T-cell (primary cell): ENCODE measurements at regions of chr22 and their contacts with region 1.

Region 1: DNA sequence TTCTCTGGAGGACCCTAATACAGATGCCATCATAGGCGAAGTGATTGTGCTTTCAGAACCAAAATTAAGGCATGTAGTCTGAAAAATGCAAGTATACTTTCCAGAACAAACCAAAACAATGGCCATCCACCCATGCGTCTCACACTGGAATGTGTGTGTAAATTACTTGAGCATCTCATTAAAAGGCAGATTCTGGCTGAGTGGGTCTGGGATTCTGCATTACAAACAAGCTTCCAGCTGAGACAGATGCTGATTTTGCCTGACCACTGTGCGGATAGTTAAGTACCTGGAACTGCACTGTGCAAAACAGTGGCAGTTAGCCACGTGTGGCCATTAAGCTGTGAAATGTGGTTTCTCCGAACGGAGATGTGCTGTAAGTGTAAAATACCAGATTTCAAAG is 26.2 kb downstream of the RRP7A start:
- DNase-seq: no peak
- ATAC-seq: no peak
- H3K4me3 ChIP-seq: no peak overlapping the region
- H3K4me3 Mint-ChIP-seq: no peak overlapping the region
- H3K27ac ChIP-seq: no peak overlapping the region
- H3K27ac Mint-ChIP-seq: no peak overlapping the region
- H3K4me1 ChIP-seq: no peaks in the 10 kb centered on the region
- H3K4me1 Mint-ChIP-seq: peaks cover 0 to 3% (median 3%) of the 10 kb centered on the region in 3 donors
- H3K27me3 ChIP-seq: peaks cover 0 to 5% of the 10 kb centered on the region in 2 experiments
- H3K27me3 Mint-ChIP-seq: no peaks in the 10 kb centered on the region

Region 2: DNA sequence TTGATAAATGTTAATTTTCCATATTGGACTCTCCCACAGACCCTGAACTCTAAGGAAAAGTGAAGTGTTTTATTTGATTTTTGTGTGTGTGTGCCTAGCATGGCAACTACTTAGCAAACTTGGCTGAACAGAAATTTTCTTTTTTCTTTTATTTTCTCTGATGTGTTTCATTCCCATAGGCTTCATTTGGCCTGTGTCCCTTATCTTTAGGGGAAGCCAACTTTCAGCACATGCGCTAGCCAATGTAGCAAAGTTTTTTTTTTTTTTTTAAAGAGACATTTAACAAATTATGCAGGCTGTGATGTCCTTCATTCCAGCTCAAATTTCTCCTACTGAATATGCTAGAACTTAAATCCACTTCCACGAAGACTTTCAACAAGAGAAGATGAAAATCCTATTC is 237.2 kb before region 1 on chr22:
- CTCF ChIA-PET with region 1: no interaction called
- POLR2A ChIA-PET with region 1: interaction called in 1 of 2 experiments, 11 read pairs
- DNase-seq: no peak
- ATAC-seq: no peak
- H3K4me3 ChIP-seq: no peak overlapping the region
- H3K4me3 Mint-ChIP-seq: no peak overlapping the region
- H3K27ac ChIP-seq: no peak overlapping the region
- H3K27ac Mint-ChIP-seq: no peak overlapping the region
- H3K4me1 ChIP-seq: peaks cover 10 to 36% of the 10 kb centered on the region in 2 experiments
- H3K4me1 Mint-ChIP-seq: peaks cover 65 to 68% (median 67%) of the 10 kb centered on the region in 3 donors
- H3K27me3 ChIP-seq: no peaks in the 10 kb centered on the region
- H3K27me3 Mint-ChIP-seq: no peaks in the 10 kb centered on the region